ENCODE measurements at regions of chr17 and their contacts with region 1.

Region 1: DNA sequence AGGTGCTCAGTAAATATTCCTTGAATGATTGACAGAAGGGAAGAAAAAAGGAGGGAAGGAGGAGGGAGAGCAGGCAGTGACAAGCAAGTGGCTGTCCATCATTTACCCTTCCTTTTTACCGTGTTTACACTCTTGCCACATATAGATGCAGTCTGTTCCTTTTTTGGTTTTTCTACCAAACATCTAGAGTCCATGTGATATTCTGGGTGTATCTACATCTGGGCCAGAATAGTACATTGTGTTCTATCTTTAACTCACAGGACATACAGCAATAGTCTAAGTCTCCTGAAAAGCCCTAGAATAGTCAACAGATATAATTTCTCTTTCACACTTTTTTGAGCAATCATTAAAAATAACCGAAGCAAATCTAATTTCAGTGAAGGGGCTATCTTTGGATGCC is 33.5 kb downstream of the KCNJ2 start:
- DNase-seq: no peak
- H3K4me3 ChIP-seq: no peak overlapping the region
- H3K27ac ChIP-seq: no peak overlapping the region
- H3K4me1 ChIP-seq: no peaks in the 10 kb centered on the region
- H3K27me3 ChIP-seq: no peaks in the 10 kb centered on the region
- CTCF ChIP-seq: no peak
- POLR2A ChIP-seq: no peak

Region 2: GRCh38 chr17:70242781-70243437 is 40.1 kb after region 1 on chr17:
- CTCF ChIA-PET with region 1: no interaction called
- POLR2A ChIA-PET with region 1: no interaction called
- dilution Hi-C with region 1: no loop called
- intact Hi-C with region 1: loop called (anchors 5 kb)
- DNase-seq: peak; percentile 22
- H3K4me3 ChIP-seq: no peak overlapping the region
- H3K27ac ChIP-seq: no peak overlapping the region
- H3K4me1 ChIP-seq: peaks cover 8% of the 10 kb centered on the region
- H3K27me3 ChIP-seq: no peaks in the 10 kb centered on the region
- CTCF ChIP-seq: no peak
- POLR2A ChIP-seq: no peak

Region 3: DNA sequence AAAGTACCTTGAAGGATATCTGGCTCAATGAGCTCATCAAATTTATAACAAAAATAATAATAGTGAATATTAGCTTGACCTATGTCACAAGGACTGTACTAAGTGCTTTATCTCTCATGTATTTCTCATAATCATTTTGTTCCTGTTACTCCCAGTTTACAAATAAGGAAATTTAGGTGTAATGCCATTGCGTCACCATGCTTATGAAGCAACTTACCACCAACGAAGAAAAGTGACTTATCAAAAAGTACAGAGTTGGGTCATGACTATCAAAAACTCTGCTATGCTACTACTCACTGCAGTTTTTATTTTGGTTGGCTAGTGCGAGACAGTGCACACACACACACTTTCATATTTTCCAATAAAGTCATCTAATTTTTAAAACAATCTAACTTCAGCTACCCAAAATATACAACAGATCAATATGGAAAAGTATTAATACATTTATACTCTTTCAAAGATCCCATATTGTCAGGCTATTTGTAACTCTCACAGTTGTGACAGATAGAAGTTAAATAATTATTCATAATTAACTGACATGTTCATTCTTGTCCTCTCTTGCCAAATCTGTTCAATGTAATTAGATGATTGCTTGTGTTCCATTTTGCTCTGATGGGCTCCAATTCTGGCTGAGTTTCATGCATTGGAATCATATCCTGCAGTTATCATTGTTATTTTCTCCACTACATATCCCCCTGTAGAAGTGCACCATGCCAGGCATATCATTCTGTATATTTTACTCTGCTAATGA is 85.9 kb after region 1 on chr17:
- CTCF ChIA-PET with region 1: no interaction called
- POLR2A ChIA-PET with region 1: no interaction called
- dilution Hi-C with region 1: no loop called
- intact Hi-C with region 1: no loop called
- DNase-seq: no peak
- H3K4me3 ChIP-seq: no peak overlapping the region
- H3K27ac ChIP-seq: no peak overlapping the region
- H3K4me1 ChIP-seq: peaks cover 7% of the 10 kb centered on the region
- H3K27me3 ChIP-seq: no peaks in the 10 kb centered on the region
- CTCF ChIP-seq: no peak
- POLR2A ChIP-seq: no peak

Region 4: GRCh38 chr17:70405492-70406220 is 202.8 kb after region 1 on chr17:
- CTCF ChIA-PET with region 1: no interaction called
- POLR2A ChIA-PET with region 1: no interaction called
- dilution Hi-C with region 1: no loop called
- intact Hi-C with region 1: no loop called
- DNase-seq: peak; percentile 24
- H3K4me3 ChIP-seq: no peak overlapping the region
- H3K27ac ChIP-seq: no peak overlapping the region
- H3K4me1 ChIP-seq: peaks cover 6% of the 10 kb centered on the region
- H3K27me3 ChIP-seq: no peaks in the 10 kb centered on the region
- CTCF ChIP-seq: no peak
- POLR2A ChIP-seq: no peak